ENCODE measurements at regions of chr9 and their contacts with region 1.

Region 1: DNA sequence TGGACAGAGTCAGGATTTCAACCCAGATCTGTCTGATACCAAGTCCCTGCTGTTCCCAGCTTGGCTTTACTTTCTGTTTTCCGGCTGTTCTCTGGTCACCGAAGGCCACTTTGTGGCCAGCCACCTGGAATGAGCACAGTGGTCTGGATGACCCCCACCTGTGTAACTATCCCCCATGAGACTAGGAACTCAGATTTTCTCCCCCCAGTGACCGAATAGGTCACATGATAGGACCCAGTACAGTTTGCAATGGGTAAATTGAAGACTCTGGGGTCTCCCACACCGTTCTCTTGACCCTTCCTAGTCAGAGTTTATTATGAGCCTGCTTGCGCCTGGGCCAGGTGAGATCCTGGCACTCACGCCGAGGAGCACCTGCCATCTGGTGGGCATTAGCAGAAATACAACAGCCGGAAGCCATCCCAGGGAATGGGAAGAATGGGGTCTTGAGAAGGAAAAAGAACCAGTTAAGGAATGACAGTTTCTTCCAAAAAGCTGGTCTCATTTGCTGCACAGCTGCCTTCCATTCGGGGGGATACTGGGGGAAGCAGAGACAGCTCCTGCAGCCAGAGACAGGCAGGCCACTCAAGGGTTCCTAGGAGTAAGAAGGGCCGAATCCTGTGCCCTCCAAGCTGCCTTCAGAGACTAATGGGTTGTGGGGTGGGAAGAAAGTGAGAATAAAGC is 7.1 kb downstream of the PHYHD1 start:
- DNase-seq: peak; percentile 68
- H3K4me3 Mint-ChIP-seq: no peak overlapping the region
- H3K27ac Mint-ChIP-seq: no peak overlapping the region
- H3K4me1 Mint-ChIP-seq: peaks cover 10% of the 10 kb centered on the region
- H3K27me3 Mint-ChIP-seq: no peaks in the 10 kb centered on the region

Region 2: GRCh38 chr9:128643519-128644300 is 284.2 kb before region 1 on chr9:
- CTCF ChIA-PET with region 1: interaction called, 8 read pairs
- intact Hi-C with region 1: loop called (anchors 2 kb)
- DNase-seq: no peak
- H3K4me3 Mint-ChIP-seq: no peak overlapping the region
- H3K27ac Mint-ChIP-seq: no peak overlapping the region
- H3K4me1 Mint-ChIP-seq: no peaks in the 10 kb centered on the region
- H3K27me3 Mint-ChIP-seq: no peaks in the 10 kb centered on the region

Region 3: GRCh38 chr9:128702445-128702948 is 225.4 kb before region 1 on chr9 and contains the start of gene PKN3:
- CTCF ChIA-PET with region 1: no interaction called
- intact Hi-C with region 1: loop called (anchors 1 kb)
- DNase-seq: peak; percentile 91
- H3K4me3 Mint-ChIP-seq: peak within 1 kb of the TSS; percentile 84
- H3K27ac Mint-ChIP-seq: peak within 1 kb of the TSS; percentile 19
- H3K4me1 Mint-ChIP-seq: peaks cover 13% of the 10 kb centered on the region
- H3K27me3 Mint-ChIP-seq: no peaks in the 10 kb centered on the region
- total RNA-seq, gene PKN3: 6.3 to 7.3 TPM

Region 4: GRCh38 chr9:128768606-128769005 is 159.3 kb before region 1 on chr9:
- CTCF ChIA-PET with region 1: no interaction called
- intact Hi-C with region 1: no loop called
- DNase-seq: no peak
- H3K4me3 Mint-ChIP-seq: no peak overlapping the region
- H3K27ac Mint-ChIP-seq: no peak overlapping the region
- H3K4me1 Mint-ChIP-seq: peaks cover 29% of the 10 kb centered on the region
- H3K27me3 Mint-ChIP-seq: no peaks in the 10 kb centered on the region

Region 5: GRCh38 chr9:128845155-128845931 is 82.5 kb before region 1 on chr9:
- CTCF ChIA-PET with region 1: interaction called, 11 read pairs
- intact Hi-C with region 1: no loop called
- DNase-seq: no peak
- H3K4me3 Mint-ChIP-seq: no peak overlapping the region
- H3K27ac Mint-ChIP-seq: no peak overlapping the region
- H3K4me1 Mint-ChIP-seq: no peaks in the 10 kb centered on the region
- H3K27me3 Mint-ChIP-seq: no peaks in the 10 kb centered on the region

Region 6: GRCh38 chr9:128863647-128864046 is 64.2 kb before region 1 on chr9:
- CTCF ChIA-PET with region 1: interaction called, 109 read pairs
- intact Hi-C with region 1: loop called (anchors 1 kb)
- DNase-seq: peak; percentile 90
- H3K4me3 Mint-ChIP-seq: no peak overlapping the region
- H3K27ac Mint-ChIP-seq: no peak overlapping the region
- H3K4me1 Mint-ChIP-seq: peaks cover 9% of the 10 kb centered on the region
- H3K27me3 Mint-ChIP-seq: no peaks in the 10 kb centered on the region

Region 7: GRCh38 chr9:128870128-128870952 is 57.5 kb before region 1 on chr9:
- CTCF ChIA-PET with region 1: interaction called, 109 read pairs
- intact Hi-C with region 1: no loop called
- DNase-seq: no peak
- H3K4me3 Mint-ChIP-seq: no peak overlapping the region
- H3K27ac Mint-ChIP-seq: no peak overlapping the region
- H3K4me1 Mint-ChIP-seq: peaks cover 9% of the 10 kb centered on the region
- H3K27me3 Mint-ChIP-seq: no peaks in the 10 kb centered on the region